Activated CD4-positive, alpha-beta memory T cell treated with anti-CD3 and anti-CD28 coated beads for 36 hours (primary cell): ENCODE measurements at regions of chr18 and their contacts with region 1.

Region 1: GRCh38 chr18:58676270-58676669 is 5.0 kb downstream of the MALT1 start:
- DNase-seq: no peak
- H3K4me3 Mint-ChIP-seq: peak overlapping the region; percentile 43
- H3K27ac Mint-ChIP-seq: peak overlapping the region; percentile 18
- H3K4me1 Mint-ChIP-seq: peaks cover 67% of the 10 kb centered on the region
- H3K27me3 Mint-ChIP-seq: no peaks in the 10 kb centered on the region

Region 2: DNA sequence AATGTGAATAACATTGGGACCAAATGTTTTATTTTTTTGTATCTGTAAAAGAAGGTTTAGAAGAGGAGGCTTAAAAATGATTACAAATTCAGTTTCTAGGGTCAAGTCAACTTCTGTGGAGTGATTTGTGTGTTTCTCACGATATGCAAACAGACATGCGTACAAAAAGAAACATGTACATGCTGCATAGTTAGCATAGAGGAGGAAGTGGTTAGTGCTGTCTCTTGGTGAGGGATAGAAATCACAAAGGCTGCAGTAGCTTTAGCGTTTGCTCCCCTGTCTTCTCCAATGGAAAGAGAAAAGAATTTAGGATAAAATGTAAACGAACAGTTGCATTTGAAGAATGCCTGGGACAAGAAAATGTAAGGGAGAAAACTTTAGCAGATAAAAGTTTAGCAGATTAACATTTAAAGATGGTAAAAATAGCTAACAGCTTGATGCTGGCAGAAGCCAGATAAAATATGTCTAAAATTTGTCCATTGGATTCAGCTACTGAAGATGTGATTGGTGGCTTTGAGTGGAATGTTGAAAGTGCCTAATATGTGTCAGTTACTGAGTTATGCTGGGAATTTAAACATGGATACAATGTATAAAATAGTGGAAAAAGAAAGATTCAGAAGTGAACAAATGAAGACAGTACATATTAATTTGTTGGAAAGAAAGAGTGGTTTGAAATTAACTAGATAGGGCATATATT is 39.9 kb after region 1 on chr18:
- CTCF ChIA-PET with region 1: no interaction called
- POLR2A ChIA-PET with region 1: interaction called, 3 read pairs
- intact Hi-C with region 1: loop called (anchors 2 kb)
- DNase-seq: no peak
- H3K4me3 Mint-ChIP-seq: no peak overlapping the region
- H3K27ac Mint-ChIP-seq: peak overlapping the region; percentile 46
- H3K4me1 Mint-ChIP-seq: peaks cover 44% of the 10 kb centered on the region
- H3K27me3 Mint-ChIP-seq: no peaks in the 10 kb centered on the region